ENCODE measurements at regions of chr20 and their contacts with region 1.

Region 1: DNA sequence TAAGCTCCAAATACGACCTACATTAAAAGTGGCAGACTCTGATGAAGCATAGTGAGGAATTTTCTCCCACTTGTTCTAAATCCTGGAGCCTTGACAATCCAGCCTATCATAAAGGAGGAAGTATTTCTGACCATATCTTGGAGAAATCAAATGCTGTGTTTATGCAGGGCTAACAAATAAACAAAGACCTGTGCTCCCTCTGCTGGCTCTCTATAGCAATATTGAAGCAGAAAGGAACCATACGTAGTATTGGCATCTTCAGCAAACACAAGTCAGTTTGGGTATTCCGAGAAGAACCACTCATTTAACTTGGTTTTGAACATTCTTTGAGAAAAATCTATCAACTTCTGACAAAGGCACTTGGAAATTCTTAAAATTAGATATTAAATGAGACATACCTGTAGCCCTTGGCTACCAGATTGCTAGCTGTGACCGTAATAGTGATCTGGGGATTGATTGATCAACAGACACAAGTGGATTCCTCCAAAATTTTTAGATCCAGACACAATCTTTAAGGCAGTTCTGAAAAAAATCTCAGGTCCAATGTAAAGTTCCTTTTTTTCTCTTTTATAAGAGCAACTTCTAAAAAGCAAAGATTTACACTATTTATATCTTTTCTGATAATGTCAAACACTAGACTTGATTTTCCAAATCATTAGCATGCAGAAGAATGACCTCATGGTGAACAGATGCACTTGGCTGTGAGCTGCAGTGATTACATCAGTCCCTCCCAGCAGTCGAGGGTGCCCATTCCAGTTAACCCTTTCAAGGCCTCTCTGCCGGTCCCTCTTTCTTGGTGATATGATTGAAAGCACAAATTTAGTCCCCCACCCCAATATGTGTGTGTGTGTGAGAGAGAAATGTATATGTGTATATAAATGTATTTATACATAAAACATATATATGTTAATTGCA is 40.2 kb downstream of the INSM1 start:
- DNase-seq: no peak
- H3K4me3 Mint-ChIP-seq: no peak overlapping the region
- H3K27ac Mint-ChIP-seq: no peak overlapping the region
- H3K4me1 Mint-ChIP-seq: peaks cover 25% of the 10 kb centered on the region
- H3K27me3 Mint-ChIP-seq: no peaks in the 10 kb centered on the region

Region 2: DNA sequence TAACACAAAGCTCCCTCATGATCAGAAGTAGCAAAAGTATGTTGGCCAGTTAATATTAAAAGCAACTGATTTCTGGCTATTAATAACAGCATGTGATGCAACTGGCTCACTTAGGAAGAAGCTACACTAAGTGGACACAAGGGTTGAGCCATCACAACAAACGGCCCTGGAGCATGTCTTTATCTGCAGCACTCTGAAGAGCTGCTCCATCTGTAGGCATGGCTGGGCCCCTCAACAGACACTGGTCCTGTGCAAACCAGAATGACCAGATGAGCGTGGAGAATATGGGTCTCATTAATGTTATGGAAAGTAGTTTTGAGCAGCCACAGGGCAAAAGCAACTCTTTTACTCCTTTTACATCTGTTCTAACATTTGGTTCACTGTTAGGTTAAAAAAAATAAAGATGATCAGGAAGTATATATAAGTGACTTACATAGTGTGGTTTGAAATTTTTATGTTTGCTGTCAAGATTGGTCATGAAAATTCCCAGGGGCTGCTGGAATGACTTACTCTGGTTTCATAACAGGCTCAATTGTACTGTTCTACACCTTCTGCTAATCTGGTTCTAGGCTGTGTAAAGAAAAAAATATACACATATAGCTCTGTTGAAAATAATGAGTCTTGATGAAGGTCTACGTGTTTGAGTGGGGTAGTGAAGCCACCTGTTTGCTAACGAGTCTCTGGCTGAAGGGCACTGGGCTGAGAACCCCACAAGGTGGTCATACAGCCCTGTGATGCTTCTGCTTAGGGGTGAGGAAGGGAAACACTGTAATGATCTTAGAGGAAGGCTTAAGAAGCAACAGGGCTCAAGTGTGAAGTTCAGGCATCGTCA is 17.9 kb after region 1 on chr20:
- CTCF ChIA-PET with region 1: no interaction called
- POLR2A ChIA-PET with region 1: interaction called, 3 read pairs
- intact Hi-C with region 1: loop called (anchors 1 kb)
- DNase-seq: peak; percentile 32
- H3K4me3 Mint-ChIP-seq: no peak overlapping the region
- H3K27ac Mint-ChIP-seq: peak overlapping the region; percentile 85
- H3K4me1 Mint-ChIP-seq: peaks cover 42% of the 10 kb centered on the region
- H3K27me3 Mint-ChIP-seq: no peaks in the 10 kb centered on the region

Region 3: DNA sequence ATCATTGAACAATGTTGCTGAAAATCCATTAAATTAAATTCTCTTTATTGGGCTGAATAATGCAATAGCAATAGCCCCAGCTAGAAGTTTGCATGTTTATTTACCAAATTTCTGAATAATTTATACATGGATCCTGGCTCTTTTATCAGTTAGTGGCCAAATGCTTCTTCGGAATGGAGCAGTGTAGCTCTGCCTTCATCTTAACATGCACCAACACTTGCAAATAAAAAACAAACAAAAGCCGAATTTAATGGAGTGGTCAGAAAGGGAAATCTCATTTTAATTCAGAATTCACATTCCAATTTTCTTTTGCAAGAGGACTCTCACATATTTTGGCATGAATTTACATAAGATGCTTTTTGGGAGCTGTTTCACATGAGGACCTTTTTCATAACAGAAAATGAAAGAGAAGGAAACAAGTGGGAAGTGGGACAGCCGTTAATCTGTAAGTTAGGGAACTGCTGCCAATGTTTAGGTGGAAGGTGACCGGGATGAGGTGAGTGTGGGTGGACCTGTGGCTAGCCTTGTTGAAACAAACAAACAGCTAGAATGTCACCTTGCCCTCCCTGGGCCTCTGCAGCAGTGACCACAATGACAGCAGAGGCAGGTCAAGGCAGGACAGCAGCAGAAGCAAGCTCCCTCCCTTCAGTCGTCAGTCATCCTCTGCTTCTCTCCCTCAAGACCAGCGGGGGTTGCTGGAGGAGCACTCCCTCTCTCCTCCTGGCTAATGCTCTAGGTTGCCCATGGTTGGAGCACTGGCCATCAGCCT is 32.9 kb after region 1 on chr20:
- CTCF ChIA-PET with region 1: no interaction called
- POLR2A ChIA-PET with region 1: no interaction called
- intact Hi-C with region 1: no loop called
- DNase-seq: no peak
- H3K4me3 Mint-ChIP-seq: no peak overlapping the region
- H3K27ac Mint-ChIP-seq: no peak overlapping the region
- H3K4me1 Mint-ChIP-seq: no peaks in the 10 kb centered on the region
- H3K27me3 Mint-ChIP-seq: no peaks in the 10 kb centered on the region

Region 4: GRCh38 chr20:20452254-20452676 is 44.1 kb after region 1 on chr20:
- CTCF ChIA-PET with region 1: interaction called, 4 read pairs
- POLR2A ChIA-PET with region 1: interaction called, 4 read pairs
- intact Hi-C with region 1: loop called (anchors 2 kb)
- DNase-seq: peak; percentile 87
- H3K4me3 Mint-ChIP-seq: peak overlapping the region; percentile 72
- H3K27ac Mint-ChIP-seq: peak overlapping the region; percentile 71
- H3K4me1 Mint-ChIP-seq: peaks cover 49% of the 10 kb centered on the region
- H3K27me3 Mint-ChIP-seq: no peaks in the 10 kb centered on the region

Region 5: DNA sequence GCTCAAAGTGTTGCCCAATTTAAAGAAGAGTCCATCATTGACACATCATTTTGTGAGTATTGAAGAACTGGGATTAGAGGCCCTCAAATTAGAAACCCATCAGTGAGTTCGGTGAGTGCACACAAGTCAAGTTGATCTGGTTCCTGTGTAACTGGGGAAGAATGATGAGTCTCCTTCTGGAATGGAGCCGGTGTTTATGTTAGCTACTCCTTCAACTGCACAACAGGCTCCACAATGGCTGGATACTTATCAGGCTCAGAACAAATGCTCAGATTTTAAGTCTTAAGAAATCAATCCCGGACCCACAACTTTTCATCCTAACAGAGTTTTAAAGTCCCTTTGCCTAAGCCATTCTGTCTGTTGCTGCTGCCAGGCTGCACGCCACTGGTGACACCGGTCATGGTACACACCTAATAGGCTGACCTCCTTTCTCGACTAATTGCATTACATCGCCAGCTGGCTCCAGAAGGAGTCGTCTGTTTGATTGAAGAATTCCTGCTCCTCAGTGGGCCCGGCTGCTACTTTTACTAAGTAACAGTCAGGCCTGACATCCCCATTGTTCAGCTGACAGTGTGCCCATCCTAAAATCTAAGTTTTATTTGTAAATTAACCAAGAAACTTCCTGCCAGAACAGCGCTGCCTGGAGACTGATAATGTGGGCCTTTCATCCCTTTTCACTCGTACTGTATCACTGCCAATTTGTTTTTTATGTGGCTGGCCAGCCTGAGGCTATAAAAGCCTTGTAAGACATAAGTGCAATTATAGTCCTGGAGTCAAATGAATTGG is 90.1 kb after region 1 on chr20:
- CTCF ChIA-PET with region 1: interaction called, 3 read pairs
- POLR2A ChIA-PET with region 1: interaction called, 7 read pairs
- intact Hi-C with region 1: loop called (anchors 1 kb)
- DNase-seq: no peak
- H3K4me3 Mint-ChIP-seq: no peak overlapping the region
- H3K27ac Mint-ChIP-seq: peak overlapping the region; percentile 84
- H3K4me1 Mint-ChIP-seq: peaks cover 62% of the 10 kb centered on the region
- H3K27me3 Mint-ChIP-seq: no peaks in the 10 kb centered on the region

Region 6: DNA sequence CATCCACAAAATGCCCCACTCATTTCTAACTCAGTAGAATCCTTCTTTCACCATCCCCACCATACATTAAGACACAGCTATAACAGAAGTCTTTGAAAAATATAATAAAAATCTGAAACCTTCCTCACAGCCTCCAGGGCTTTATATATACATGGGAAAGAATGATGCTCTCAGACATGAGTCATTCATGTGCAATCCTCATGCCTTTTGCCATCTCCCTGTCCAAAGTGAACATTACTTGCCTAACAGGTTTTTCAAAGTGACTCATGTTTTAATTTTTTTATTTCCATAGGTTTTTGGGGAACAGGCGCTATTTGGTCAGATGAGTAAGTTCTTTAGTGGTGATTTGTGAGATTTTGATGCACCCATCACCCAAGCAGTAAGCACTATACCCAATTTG is 141.6 kb after region 1 on chr20:
- CTCF ChIA-PET with region 1: no interaction called
- POLR2A ChIA-PET with region 1: interaction called, 3 read pairs
- intact Hi-C with region 1: loop called (anchors 2 kb)
- DNase-seq: no peak
- H3K4me3 Mint-ChIP-seq: no peak overlapping the region
- H3K27ac Mint-ChIP-seq: no peak overlapping the region
- H3K4me1 Mint-ChIP-seq: peaks cover 39% of the 10 kb centered on the region
- H3K27me3 Mint-ChIP-seq: no peaks in the 10 kb centered on the region

Region 7: GRCh38 chr20:20786428-20786827 is 378.3 kb after region 1 on chr20:
- CTCF ChIA-PET with region 1: no interaction called
- POLR2A ChIA-PET with region 1: no interaction called
- intact Hi-C with region 1: no loop called
- DNase-seq: no peak
- H3K4me3 Mint-ChIP-seq: no peak overlapping the region
- H3K27ac Mint-ChIP-seq: no peak overlapping the region
- H3K4me1 Mint-ChIP-seq: no peaks in the 10 kb centered on the region
- H3K27me3 Mint-ChIP-seq: no peaks in the 10 kb centered on the region